GM12878 (cell line): ENCODE measurements at regions of chr18 and their contacts with region 1.

Region 1: DNA sequence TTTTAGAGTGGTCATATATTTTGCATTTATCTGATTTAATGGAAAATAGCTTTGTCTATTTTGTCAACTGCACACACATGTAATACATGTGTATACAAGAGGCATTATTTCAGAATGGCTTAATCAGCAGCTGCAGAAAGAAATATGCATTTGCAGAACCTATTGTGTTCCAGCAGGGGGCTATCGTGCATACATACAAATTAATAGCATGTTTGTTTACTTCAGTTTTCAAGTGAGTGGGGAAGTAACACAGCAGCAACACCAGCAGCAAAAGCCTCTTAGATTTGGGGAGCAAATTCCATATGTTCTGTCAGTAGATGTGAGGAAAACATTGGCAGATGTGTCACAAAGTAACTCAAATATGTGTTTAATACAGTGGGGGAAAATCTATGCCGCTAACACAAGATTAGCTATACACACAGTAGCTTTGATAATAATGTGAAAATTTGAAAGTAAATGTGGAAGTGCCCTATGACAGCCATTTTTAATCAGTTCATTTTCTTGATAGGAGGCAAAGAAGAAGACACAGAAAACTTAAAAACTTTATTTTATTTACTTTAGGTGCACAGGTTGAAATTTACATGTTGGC is 218.1 kb downstream of the WDR7 start:
- DNase-seq: peak; percentile 11
- ATAC-seq: peak; percentile 86
- H3K4me3 ChIP-seq: no peak overlapping the region
- H3K27ac ChIP-seq: no peak overlapping the region
- H3K4me1 ChIP-seq: no peaks in the 10 kb centered on the region
- H3K27me3 ChIP-seq: no peaks in the 10 kb centered on the region
- CTCF ChIP-seq: peak; percentile 73 to 78 (median 75)
- EP300 ChIP-seq: no peak
- POLR2A ChIP-seq: no peak
- RAD21 ChIP-seq: peak; percentile 91

Region 2: GRCh38 chr18:56851774-56852173 is 17.5 kb before region 1 on chr18:
- CTCF ChIA-PET with region 1: interaction called, 18 read pairs
- POLR2A ChIA-PET with region 1: no interaction called
- RAD21 ChIA-PET with region 1: interaction called, 3 read pairs
- SMC1A ChIA-PET with region 1: interaction called, 6 read pairs
- in situ Hi-C with region 1: no loop called
- intact Hi-C with region 1: no loop called
- DNase-seq: peak; percentile 17
- ATAC-seq: peak; percentile 97
- H3K4me3 ChIP-seq: no peak overlapping the region
- H3K27ac ChIP-seq: no peak overlapping the region
- H3K4me1 ChIP-seq: peaks cover 6% of the 10 kb centered on the region; the same call in 1 of the 2 replicates
- H3K27me3 ChIP-seq: no peaks in the 10 kb centered on the region
- CTCF ChIP-seq: no peak
- EP300 ChIP-seq: peak in 1 of 2 experiments; percentile 12; a peak in 1 of 4 replicates
- POLR2A ChIP-seq: no peak
- RAD21 ChIP-seq: no peak

Region 3: GRCh38 chr18:57004366-57005121 is 135.3 kb after region 1 on chr18:
- CTCF ChIA-PET with region 1: interaction called, 15 read pairs
- POLR2A ChIA-PET with region 1: interaction called, 3 read pairs
- RAD21 ChIA-PET with region 1: interaction called, 5 read pairs
- SMC1A ChIA-PET with region 1: interaction called, 11 read pairs
- in situ Hi-C with region 1: no loop called
- intact Hi-C with region 1: no loop called
- DNase-seq: peak; percentile 63
- ATAC-seq: peak; percentile 97
- H3K4me3 ChIP-seq: no peak overlapping the region
- H3K27ac ChIP-seq: peak overlapping the region; percentile 71
- H3K4me1 ChIP-seq: peaks cover 16% of the 10 kb centered on the region
- H3K27me3 ChIP-seq: no peaks in the 10 kb centered on the region
- CTCF ChIP-seq: no peak
- EP300 ChIP-seq: peak in 1 of 2 experiments; percentile 26; a peak in 1 of 4 replicates
- POLR2A ChIP-seq: no peak
- RAD21 ChIP-seq: no peak

Region 4: GRCh38 chr18:57029761-57030160 is 160.5 kb after region 1 on chr18:
- CTCF ChIA-PET with region 1: interaction called, 7 read pairs
- POLR2A ChIA-PET with region 1: no interaction called
- RAD21 ChIA-PET with region 1: interaction called, 11 read pairs
- SMC1A ChIA-PET with region 1: interaction called, 11 read pairs
- in situ Hi-C with region 1: no loop called
- intact Hi-C with region 1: no loop called
- DNase-seq: no peak
- ATAC-seq: no peak
- H3K4me3 ChIP-seq: no peak overlapping the region
- H3K27ac ChIP-seq: no peak overlapping the region
- H3K4me1 ChIP-seq: no peaks in the 10 kb centered on the region
- H3K27me3 ChIP-seq: no peaks in the 10 kb centered on the region
- CTCF ChIP-seq: 0 out of 6 replicates have a peak, but pooled peaks of 1 of the 3 experiments have one; percentile 5
- EP300 ChIP-seq: no peak
- POLR2A ChIP-seq: no peak
- RAD21 ChIP-seq: 0 out of 2 replicates have a peak, but pooled peaks have one; percentile 12

Region 5: DNA sequence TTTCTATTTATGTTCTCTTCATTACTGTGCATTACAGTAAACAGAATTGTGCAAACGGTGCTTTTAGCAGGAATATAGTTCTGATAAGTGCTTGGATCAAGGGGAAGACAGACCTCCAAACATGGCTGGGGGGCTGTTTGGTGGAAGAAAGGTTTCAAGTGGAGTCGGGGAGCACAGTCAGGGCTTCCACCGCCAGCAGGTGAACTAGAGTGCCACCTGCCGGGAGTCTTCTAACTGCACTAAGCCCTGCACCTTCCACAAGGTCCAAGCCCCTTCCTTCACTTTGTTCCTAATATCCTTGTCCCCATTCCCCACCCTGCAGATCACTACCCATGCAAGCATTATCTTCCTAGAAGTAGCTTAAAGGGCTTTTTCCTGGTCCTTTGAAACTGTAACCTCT is 577.0 kb after region 1 on chr18:
- CTCF ChIA-PET with region 1: interaction called, 38 read pairs
- POLR2A ChIA-PET with region 1: no interaction called
- RAD21 ChIA-PET with region 1: interaction called, 10 read pairs
- SMC1A ChIA-PET with region 1: interaction called, 29 read pairs
- in situ Hi-C with region 1: loop called (anchors 5 kb)
- intact Hi-C with region 1: loop called (anchors 1 kb)
- DNase-seq: no peak
- ATAC-seq: peak; percentile 90
- H3K4me3 ChIP-seq: no peak overlapping the region
- H3K27ac ChIP-seq: no peak overlapping the region
- H3K4me1 ChIP-seq: no peaks in the 10 kb centered on the region
- H3K27me3 ChIP-seq: peaks cover 2 to 10% of the 10 kb centered on the region in 2 experiments
- CTCF ChIP-seq: peak; percentile 77 to 82 (median 79)
- EP300 ChIP-seq: no peak
- POLR2A ChIP-seq: no peak
- RAD21 ChIP-seq: peak; percentile 70